ENCODE measurements at regions of chr2 and their contacts with region 1.

Region 1: DNA sequence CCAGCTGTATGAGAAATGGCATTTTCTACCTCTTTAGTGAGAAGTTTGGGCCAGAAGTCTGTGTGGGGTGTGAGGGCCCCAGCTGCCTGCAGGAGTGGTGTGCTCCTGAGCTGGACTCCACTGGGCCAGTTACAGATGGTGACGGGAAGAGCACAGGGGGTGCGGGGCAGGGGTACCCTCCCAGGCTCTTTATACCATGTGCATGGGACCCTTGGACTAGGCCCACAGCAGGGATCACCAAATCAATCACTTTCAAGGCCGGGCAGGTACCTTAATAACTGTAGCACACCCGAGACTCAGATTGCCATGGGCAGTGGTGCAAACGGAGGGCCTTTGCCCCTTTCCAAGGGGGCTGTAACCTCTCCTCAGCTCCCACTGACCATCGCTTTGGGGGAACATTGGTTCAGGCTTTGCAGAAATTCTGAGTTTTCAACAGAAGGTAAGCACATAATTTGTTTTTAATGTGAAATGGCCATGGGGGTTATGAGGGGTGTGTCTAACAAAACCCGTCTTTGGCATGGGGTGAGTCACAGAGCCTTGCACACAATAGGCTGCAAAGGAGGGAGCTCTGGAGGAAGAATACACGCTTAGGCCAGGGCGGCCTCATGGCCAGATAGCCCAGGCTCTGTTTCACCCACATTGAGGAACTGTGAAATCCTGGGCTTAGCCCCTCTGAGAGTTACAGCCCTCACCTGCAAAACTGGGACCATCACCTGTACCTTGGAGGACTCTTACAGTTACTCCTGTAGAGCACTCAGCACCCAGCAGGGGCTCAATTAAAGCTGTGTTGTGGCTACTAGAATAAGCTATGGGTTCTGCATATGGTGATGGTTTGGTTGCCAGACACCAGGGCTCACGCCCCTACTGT is 141.0 kb upstream of the BCL2L11 start:
- DNase-seq: no peak
- ATAC-seq: peak in 6 of 8 donors; percentile 9 to 67 (median 28)
- H3K4me3 ChIP-seq: no peak overlapping the region
- H3K27ac ChIP-seq: peak overlapping the region in 3 of 10 donors; percentile 25 to 47 (median 36)
- H3K4me1 ChIP-seq: peaks cover 0 to 15% (median 7%) of the 10 kb centered on the region in 9 donors
- H3K27me3 ChIP-seq: peaks cover 0 to 2% (median 0%) of the 10 kb centered on the region in 7 donors
- CTCF ChIP-seq: no peak

Region 2: DNA sequence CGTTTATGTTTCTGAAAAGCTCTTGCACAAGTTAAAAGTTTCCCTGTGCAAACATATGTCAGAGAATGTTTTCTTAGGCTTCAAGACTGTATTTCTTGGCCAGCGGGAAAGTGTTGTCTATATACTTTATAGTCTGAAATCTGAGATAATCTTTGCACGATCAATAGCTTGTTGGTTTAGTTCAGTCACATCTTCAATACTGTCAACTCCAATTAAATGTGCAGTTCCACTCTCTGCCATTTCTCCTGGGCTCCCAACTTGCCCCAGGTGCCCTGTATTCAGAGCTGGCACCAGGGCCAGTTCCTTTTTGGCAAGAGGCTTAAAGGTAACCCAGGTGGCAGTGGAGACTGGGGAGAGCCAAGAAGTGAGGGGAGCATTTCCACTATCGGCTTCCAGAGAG is 182.9 kb before region 1 on chr2:
- intact Hi-C with region 1: no loop called
- DNase-seq: no peak
- ATAC-seq: no peak
- H3K4me3 ChIP-seq: no peak overlapping the region
- H3K27ac ChIP-seq: no peak overlapping the region
- H3K4me1 ChIP-seq: peaks cover 0 to 23% (median 6%) of the 10 kb centered on the region in 9 donors
- H3K27me3 ChIP-seq: peaks cover 0 to 17% (median 5%) of the 10 kb centered on the region in 7 donors
- CTCF ChIP-seq: no peak

Region 3: GRCh38 chr2:110897966-110898365 is 81.7 kb before region 1 on chr2:
- intact Hi-C with region 1: loop called in 1 of 10 experiments (anchors 10 kb)
- DNase-seq: no peak
- ATAC-seq: no peak
- H3K4me3 ChIP-seq: no peak overlapping the region
- H3K27ac ChIP-seq: no peak overlapping the region
- H3K4me1 ChIP-seq: no peaks in the 10 kb centered on the region
- H3K27me3 ChIP-seq: no peaks in the 10 kb centered on the region
- CTCF ChIP-seq: no peak

Region 4: GRCh38 chr2:110925479-110925878 is 54.2 kb before region 1 on chr2:
- intact Hi-C with region 1: loop called in 1 of 10 experiments (anchors 10 kb)
- DNase-seq: no peak
- ATAC-seq: no peak
- H3K4me3 ChIP-seq: no peak overlapping the region
- H3K27ac ChIP-seq: no peak overlapping the region
- H3K4me1 ChIP-seq: no peaks in the 10 kb centered on the region
- H3K27me3 ChIP-seq: no peaks in the 10 kb centered on the region
- CTCF ChIP-seq: no peak

Measured in heart right ventricle (tissue), 16 donors.